Vagina (tissue), 2 donors: ENCODE measurements at regions of chr11 and their contacts with region 1.

Region 1: GRCh38 chr11:111977146-111978027 is 40.2 kb downstream of the DIXDC1 start:
- DNase-seq: no peak
- H3K4me3 ChIP-seq: peak overlapping the region; percentile 65 to 73
- H3K27ac ChIP-seq: peak overlapping the region; percentile 96
- H3K4me1 ChIP-seq: peaks cover 44% of the 10 kb centered on the region
- H3K27me3 ChIP-seq: no peaks in the 10 kb centered on the region
- CTCF ChIP-seq: no peak
- POLR2A ChIP-seq: no peak

Region 2: GRCh38 chr11:111918390-111919258 is 58.8 kb before region 1 on chr11 and contains the start of gene C11orf52:
- intact Hi-C with region 1: no loop called
- DNase-seq: no peak
- H3K4me3 ChIP-seq: peak within 1 kb of the TSS in 1 of 2 donors; percentile 15
- H3K27ac ChIP-seq: peak within 1 kb of the TSS; percentile 50
- H3K4me1 ChIP-seq: peaks cover 32% of the 10 kb centered on the region
- H3K27me3 ChIP-seq: no peaks in the 10 kb centered on the region
- CTCF ChIP-seq: no peak
- POLR2A ChIP-seq: no peak
- total RNA-seq, gene C11orf52: 1.5 TPM

Region 3: GRCh38 chr11:111938687-111939160 is 38.7 kb before region 1 on chr11:
- intact Hi-C with region 1: loop called (anchors 5 kb)
- DNase-seq: no peak
- H3K4me3 ChIP-seq: peak overlapping the region in 1 of 2 donors; percentile 17
- H3K27ac ChIP-seq: peak overlapping the region; percentile 80
- H3K4me1 ChIP-seq: peaks cover 13% of the 10 kb centered on the region
- H3K27me3 ChIP-seq: no peaks in the 10 kb centered on the region
- CTCF ChIP-seq: no peak
- POLR2A ChIP-seq: no peak

Region 4: DNA sequence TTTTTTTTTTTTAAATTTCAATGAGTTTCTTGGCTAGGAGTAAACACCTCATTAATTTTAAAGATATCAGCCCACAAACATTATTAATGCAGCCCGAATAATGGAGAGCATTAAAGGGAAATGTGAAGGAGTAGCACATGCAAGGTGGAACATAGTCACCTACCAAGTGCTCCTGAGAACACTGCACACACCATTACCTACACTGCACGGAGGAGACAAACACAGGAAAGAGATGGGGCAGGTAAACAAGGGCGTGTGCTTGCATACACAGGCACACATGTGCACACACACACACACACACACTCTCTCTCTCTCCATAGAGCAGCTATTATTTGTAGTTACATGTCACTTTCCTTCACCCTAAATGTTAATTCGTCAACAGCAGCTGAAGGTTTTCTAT is 1957.4 kb after region 1 on chr11:
- intact Hi-C with region 1: no loop called
- DNase-seq: no peak
- H3K4me3 ChIP-seq: no peak overlapping the region
- H3K27ac ChIP-seq: no peak overlapping the region
- H3K4me1 ChIP-seq: no peaks in the 10 kb centered on the region
- H3K27me3 ChIP-seq: no peaks in the 10 kb centered on the region
- CTCF ChIP-seq: no peak
- POLR2A ChIP-seq: no peak